Dorsolateral prefrontal cortex (tissue), 120 donors: ENCODE measurements at regions of chr5 and their contacts with region 1.

Region 1: GRCh38 chr5:173963867-173964441 is 25.0 kb upstream of the C5orf47 start:
- DNase-seq: peak in 5 of 10 donors; percentile 29 to 78 (median 59)
- H3K4me3 ChIP-seq: peak overlapping the region; percentile 4 to 71 (median 50)
- H3K27ac ChIP-seq: peak overlapping the region; percentile 31 to 95 (median 87)
- H3K27me3 ChIP-seq: no peaks in the 10 kb centered on the region
- CTCF ChIP-seq: no peak

Region 2: DNA sequence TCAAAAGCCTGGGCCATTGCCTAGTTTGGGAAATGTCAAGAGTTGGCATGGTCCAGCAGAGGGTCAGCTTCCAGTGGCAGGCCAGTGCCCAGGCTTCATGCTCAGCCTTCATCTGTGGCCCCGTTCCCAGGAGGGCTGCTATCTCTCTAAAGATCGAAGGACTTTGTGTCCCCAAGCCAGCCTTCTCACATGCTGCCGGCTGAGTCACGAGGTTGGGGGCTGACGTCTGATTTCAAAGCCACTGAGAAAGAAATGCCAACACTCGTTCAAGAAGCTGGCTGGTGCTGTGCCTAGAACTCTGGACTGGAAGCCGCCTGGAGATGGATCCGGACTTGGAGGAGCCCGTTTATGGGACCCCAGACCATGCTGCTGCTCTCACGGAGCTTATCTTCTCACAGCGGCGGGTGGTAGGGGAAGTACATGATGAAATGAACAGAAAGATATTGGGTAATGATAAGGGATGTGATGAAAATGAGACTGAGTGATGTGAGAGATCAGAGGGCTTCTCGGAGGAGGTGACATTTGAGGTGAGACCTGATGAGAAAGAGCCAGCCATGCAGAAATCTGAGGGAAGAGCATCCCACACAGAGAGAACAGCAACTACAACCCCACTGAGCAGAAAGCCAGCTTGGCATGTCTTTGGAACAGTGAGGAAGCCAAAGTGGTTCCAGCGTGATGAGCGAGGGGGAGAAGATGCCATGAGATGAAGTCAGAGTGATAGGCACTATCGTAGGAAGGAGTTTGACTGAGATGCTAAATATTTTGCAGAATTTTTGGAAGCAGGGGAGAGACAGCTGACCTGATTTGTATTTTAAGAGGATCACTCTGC is 292.6 kb before region 1 on chr5:
- intact Hi-C with region 1: loop called in 1 of 2 experiments (anchors 2 kb)
- DNase-seq: peak; percentile 57 to 92 (median 86)
- H3K4me3 ChIP-seq: peak overlapping the region in 54 of 59 donors; percentile 3 to 55 (median 27)
- H3K27ac ChIP-seq: peak overlapping the region; percentile 29 to 95 (median 86)
- H3K27me3 ChIP-seq: no peaks in the 10 kb centered on the region
- CTCF ChIP-seq: peak in 1 of 56 donors; percentile 12

Region 3: DNA sequence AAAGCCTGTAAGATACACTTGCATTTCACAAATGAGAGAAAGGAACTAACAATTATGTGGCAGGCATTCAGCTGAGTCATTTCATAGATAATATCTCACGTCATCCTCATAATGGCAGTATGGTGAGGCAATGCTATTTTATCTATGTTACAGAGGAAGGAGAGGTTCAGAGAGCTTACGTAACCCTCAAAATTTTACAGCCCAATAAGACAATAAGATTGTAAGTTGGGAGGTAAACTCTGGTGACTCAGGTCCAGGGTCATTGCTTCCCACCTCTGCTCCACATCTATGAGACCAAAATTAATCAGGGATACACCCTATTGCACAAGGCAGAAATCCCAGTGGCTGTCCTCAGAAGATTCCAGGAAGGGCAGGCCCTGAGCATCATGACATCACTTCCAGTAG is 391.3 kb after region 1 on chr5:
- intact Hi-C with region 1: no loop called
- DNase-seq: no peak
- H3K4me3 ChIP-seq: no peak overlapping the region
- H3K27ac ChIP-seq: no peak overlapping the region
- H3K27me3 ChIP-seq: peaks cover 0 to 4% (median 0%) of the 10 kb centered on the region in 45 donors
- CTCF ChIP-seq: no peak